Left ventricle myocardium inferior (tissue), 1 donor: ENCODE measurements at regions of chr3 and their contacts with region 1.

Region 1: DNA sequence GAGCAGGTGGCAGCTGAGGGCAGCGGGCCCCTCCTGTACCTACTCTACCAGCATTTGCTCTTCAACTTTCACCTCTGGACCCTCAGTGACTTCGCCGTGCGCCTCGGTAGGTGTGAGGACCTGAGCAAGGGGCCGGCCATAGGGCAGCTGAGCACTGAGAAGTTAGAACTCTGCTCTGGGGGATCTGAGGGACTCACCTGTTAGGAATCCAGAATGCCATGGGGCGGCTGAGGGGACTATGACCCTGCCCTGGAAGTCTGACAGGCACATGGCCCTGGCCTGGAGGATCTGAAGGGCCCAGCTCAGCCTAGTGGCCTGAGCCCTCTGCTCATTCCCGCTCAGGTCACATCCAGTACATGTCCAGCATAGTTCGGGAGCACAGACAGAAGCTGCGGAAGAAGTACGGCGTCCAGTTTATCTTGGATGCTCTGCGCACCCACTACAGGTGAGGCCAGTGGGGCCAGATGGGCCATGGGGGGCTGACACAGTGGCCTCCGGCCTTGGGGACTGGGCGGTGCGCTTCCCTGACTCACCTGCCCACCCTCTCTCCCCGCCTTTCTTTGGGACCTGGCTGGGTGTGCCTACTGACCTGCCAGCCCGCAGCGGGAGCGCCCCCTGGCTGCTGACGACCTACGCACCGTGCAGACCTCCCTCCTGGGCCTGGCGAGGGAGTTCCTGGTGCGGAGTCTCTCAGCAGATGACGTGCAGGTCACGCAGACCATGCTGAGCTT is 18.8 kb downstream of the NBEAL2 start:
- DNase-seq: peak; percentile 77
- H3K4me3 ChIP-seq: no peak overlapping the region
- H3K27ac ChIP-seq: no peak overlapping the region
- H3K4me1 ChIP-seq: no peaks in the 10 kb centered on the region
- H3K27me3 ChIP-seq: no peaks in the 10 kb centered on the region
- CTCF ChIP-seq: peak; percentile 87

Region 2: DNA sequence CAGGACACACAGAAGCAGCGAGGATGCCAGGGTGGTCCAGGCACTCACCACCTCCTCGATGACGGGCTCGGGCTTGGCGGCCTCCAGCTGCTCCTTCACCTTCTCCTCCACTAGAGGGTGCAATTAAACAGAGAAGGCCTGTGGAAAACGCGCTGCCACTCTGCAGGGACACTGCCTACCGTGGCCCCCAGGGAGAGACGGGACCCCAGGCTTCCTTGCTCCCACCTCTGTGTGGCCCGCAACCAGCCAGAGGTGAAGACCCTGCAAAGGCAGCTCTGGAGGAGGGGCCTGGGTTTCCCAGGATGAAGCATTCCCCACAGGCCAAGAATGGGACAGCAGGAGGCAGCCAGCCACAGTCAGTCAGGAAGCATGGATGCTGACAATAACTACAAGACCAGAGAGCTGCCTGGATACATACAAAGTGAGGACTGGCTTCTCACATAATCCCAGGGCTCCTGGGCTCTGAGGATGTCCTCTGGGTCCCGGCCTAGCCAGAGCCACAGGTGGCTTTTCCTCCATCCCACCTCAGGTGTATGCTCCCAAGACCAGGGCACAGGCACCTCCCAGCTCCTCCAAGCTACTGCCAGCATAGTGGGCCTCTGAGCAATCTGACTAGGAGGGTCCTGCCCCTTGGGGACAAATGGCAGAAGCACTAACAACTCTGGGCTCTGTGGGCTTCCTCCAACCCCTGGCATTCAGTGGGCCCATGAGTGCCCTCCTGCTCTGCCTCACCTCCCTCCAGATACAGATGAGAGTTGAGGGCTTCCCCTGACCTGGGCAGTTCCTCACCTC is 74.5 kb before region 1 on chr3:
- intact Hi-C with region 1: loop called (anchors 5 kb)
- DNase-seq: no peak
- H3K4me3 ChIP-seq: no peak overlapping the region
- H3K27ac ChIP-seq: no peak overlapping the region
- H3K4me1 ChIP-seq: peaks cover 59% of the 10 kb centered on the region
- H3K27me3 ChIP-seq: no peaks in the 10 kb centered on the region
- CTCF ChIP-seq: peak; percentile 77